ENCODE measurements at regions of chr19 and their contacts with region 1.

Region 1: DNA sequence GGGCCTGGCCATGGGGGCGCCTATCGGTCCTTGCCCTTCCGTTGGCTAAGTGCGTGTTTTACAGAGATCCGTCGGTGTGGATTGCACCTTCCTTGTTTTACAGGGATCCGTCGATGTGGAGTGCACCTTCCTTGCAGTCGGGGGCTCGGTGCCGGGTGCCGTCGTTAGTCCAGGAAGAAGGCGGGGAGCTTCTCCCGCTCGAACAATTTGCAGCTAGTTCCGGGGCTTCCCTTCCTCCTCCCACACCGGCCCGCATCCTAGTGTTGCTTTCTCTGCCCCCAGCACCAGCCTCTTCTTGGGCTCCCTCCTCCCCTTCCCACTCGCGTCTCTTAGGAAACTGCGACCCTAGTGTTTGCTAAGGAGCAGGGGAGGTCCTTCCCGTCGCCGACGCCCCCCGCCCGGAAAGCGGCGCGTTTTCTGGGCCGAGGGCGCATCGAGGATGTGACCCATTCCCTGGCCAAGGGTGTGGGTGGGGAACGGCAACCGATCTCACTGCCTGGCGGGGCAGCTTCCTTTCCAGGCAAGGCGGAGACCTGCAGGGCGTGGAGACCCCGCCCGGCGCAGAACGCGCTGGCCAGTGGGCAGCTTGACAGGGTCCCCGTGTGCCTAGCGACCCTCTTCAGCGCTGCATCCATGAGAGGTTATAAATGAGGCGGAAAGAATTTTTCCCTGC is 75.7 kb upstream of the ZNF91 start:
- DNase-seq: no peak
- ATAC-seq: no peak
- H3K4me3 Mint-ChIP-seq: no peak overlapping the region
- H3K27ac Mint-ChIP-seq: no peak overlapping the region
- H3K4me1 Mint-ChIP-seq: no peaks in the 10 kb centered on the region
- H3K27me3 Mint-ChIP-seq: peaks cover 18% of the 10 kb centered on the region
- CTCF ChIP-seq: no peak

Region 2: DNA sequence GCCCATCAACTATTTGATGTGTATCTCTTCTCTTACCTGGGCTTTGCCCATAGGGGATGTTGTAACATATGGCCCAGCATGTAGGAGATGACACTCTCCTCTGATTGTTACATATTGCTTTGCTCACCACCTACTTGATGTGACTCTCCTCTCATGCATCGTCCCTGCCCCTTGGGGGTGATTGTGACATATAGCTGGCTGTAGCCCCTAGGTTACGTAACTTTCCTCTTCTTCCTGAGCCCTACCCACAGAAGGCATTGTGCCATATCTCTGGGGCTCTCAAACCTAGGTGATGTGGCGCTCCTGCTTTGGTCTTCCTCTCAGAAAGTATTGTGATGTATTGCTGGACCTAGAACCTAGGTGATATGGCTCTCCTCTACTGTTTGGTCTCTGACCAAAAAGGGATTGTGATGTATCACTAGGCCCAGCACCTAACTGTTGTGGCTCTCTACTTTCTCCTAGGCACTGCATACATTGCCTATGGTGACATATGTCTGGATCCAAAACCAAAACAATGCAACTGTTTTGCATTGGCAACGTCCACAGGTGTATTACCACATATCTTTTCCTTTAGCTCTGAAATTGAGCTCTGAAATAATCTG is 149.0 kb before region 1 on chr19:
- CTCF ChIA-PET with region 1: no interaction called
- POLR2A ChIA-PET with region 1: no interaction called
- intact Hi-C with region 1: loop called (anchors 2 kb)
- DNase-seq: no peak
- ATAC-seq: no peak
- H3K4me3 Mint-ChIP-seq: no peak overlapping the region
- H3K27ac Mint-ChIP-seq: no peak overlapping the region
- H3K4me1 Mint-ChIP-seq: no peaks in the 10 kb centered on the region
- H3K27me3 Mint-ChIP-seq: no peaks in the 10 kb centered on the region
- CTCF ChIP-seq: no peak

Region 3: DNA sequence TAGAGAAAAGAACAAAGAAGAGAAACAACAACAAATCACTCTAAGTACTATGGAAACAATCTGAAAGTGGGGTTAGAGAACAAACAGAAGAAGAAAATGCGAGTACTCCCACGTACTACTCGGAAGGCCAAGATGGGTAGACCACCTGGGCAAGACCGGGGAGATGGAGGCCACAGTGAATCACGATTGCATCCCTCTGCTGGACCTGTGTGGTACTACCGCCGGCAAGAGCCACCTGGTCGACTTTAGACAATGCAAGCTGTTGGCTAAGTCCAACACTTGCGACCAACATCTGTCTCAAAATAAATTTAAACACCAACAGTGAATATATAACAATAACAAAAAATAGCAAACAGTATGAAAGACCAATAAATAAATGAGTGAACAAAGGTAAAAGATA is 30.2 kb before region 1 on chr19:
- CTCF ChIA-PET with region 1: no interaction called
- POLR2A ChIA-PET with region 1: no interaction called
- intact Hi-C with region 1: no loop called
- DNase-seq: peak; percentile 37
- ATAC-seq: no peak
- H3K4me3 Mint-ChIP-seq: no peak overlapping the region
- H3K27ac Mint-ChIP-seq: no peak overlapping the region
- H3K4me1 Mint-ChIP-seq: no peaks in the 10 kb centered on the region
- H3K27me3 Mint-ChIP-seq: no peaks in the 10 kb centered on the region
- CTCF ChIP-seq: peak; percentile 60

Region 4: GRCh38 chr19:23571175-23571574 is 100.2 kb after region 1 on chr19:
- CTCF ChIA-PET with region 1: no interaction called
- POLR2A ChIA-PET with region 1: no interaction called
- intact Hi-C with region 1: no loop called
- DNase-seq: no peak
- ATAC-seq: no peak
- H3K4me3 Mint-ChIP-seq: no peak overlapping the region
- H3K27ac Mint-ChIP-seq: no peak overlapping the region
- H3K4me1 Mint-ChIP-seq: no peaks in the 10 kb centered on the region
- H3K27me3 Mint-ChIP-seq: no peaks in the 10 kb centered on the region
- CTCF ChIP-seq: no peak

Measured in activated CD8-positive, alpha-beta T cell treated with anti-CD3 and anti-CD28 coated beads for 36 hours (primary cell).